Left colon (tissue), 2 donors: ENCODE measurements at regions of chr16 and their contacts with region 1.

Region 1: GRCh38 chr16:77675464-77676324 is 46.6 kb upstream of the NUDT7 start:
- DNase-seq: peak; percentile 26 to 55
- ATAC-seq: peak; percentile 73

Region 2: DNA sequence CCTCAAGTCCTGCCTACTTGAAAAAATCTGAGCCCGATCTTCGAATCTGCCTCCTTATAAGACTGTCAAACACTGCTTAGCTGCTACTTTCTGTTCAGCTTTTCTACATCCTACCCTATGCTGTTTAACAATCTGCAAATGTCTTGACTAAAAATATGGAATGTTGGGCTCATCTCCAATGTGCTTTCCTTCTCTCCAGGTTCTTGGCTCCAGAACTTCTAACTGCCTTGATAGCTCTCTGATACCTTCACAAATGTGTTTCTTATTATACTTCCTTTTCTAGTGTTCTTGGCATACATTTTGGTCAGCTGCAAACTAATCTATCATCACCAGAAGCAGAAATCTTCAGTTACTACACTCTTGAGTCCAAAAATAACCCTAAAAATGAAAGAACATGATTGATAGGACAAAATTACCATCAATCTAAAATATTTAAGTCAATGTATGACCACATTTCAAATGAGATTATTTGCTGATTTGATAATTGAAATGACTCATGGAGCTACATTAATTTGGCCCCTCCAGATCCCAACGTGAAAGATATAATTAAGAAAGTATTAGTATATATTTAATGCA is 857.0 kb before region 1 on chr16:
- intact Hi-C with region 1: no loop called
- DNase-seq: no peak
- ATAC-seq: no peak

Region 3: GRCh38 chr16:77788181-77789084 is 112.7 kb after region 1 on chr16 and contains the start of gene VAT1L:
- intact Hi-C with region 1: loop called in 1 of 2 experiments (anchors 10 kb)
- DNase-seq: peak in 1 of 2 donors; percentile 14
- ATAC-seq: no peak
- total RNA-seq, gene VAT1L: 0.73 to 1.6 TPM

Region 4: GRCh38 chr16:77971306-77972271 is 295.9 kb after region 1 on chr16:
- intact Hi-C with region 1: loop called (anchors 5 to 10 kb)
- DNase-seq: peak; percentile 54 to 88
- ATAC-seq: peak; percentile 76

Region 5: GRCh38 chr16:79169239-79169638 is 1493.5 kb after region 1 on chr16:
- intact Hi-C with region 1: no loop called
- DNase-seq: peak in 1 of 2 donors; percentile 6
- ATAC-seq: no peak